ENCODE measurements at regions of chr15 and their contacts with region 1.

Region 1: DNA sequence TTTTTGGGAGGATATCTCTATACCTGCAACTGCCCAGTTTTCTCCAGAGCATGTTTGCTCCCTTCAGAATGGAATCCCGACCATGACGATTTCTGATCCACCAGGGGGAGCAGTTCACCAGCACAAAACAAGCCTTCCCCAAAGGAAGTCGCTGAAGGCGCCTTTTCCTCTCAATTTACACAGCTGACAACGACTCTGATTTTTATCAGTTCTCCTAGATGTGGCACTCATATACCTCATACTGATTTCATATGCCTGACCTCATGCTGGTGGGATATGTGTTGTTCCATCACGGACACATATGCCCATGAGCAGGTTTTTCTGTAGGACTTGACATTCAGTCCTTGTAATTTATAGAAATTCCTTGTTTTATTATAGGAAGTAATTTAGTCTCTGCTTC is 1028.2 kb downstream of the MCTP2 start:
- DNase-seq: peak; percentile 58
- H3K4me3 ChIP-seq: no peak overlapping the region
- H3K27ac ChIP-seq: no peak overlapping the region
- H3K4me1 ChIP-seq: peaks cover 18% of the 10 kb centered on the region
- H3K27me3 ChIP-seq: no peaks in the 10 kb centered on the region
- CTCF ChIP-seq: peak; percentile 67 to 81

Region 2: GRCh38 chr15:95025924-95026728 is 233.4 kb before region 1 on chr15:
- CTCF ChIA-PET with region 1: no interaction called
- dilution Hi-C with region 1: no loop called
- in situ Hi-C with region 1: loop called in 1 of 2 experiments (anchors 10 kb)
- intact Hi-C with region 1: loop called (anchors 2 kb)
- DNase-seq: peak; percentile 50
- H3K4me3 ChIP-seq: no peak overlapping the region
- H3K27ac ChIP-seq: no peak overlapping the region
- H3K4me1 ChIP-seq: no peaks in the 10 kb centered on the region
- H3K27me3 ChIP-seq: no peaks in the 10 kb centered on the region
- CTCF ChIP-seq: peak; percentile 62 to 80

Region 3: DNA sequence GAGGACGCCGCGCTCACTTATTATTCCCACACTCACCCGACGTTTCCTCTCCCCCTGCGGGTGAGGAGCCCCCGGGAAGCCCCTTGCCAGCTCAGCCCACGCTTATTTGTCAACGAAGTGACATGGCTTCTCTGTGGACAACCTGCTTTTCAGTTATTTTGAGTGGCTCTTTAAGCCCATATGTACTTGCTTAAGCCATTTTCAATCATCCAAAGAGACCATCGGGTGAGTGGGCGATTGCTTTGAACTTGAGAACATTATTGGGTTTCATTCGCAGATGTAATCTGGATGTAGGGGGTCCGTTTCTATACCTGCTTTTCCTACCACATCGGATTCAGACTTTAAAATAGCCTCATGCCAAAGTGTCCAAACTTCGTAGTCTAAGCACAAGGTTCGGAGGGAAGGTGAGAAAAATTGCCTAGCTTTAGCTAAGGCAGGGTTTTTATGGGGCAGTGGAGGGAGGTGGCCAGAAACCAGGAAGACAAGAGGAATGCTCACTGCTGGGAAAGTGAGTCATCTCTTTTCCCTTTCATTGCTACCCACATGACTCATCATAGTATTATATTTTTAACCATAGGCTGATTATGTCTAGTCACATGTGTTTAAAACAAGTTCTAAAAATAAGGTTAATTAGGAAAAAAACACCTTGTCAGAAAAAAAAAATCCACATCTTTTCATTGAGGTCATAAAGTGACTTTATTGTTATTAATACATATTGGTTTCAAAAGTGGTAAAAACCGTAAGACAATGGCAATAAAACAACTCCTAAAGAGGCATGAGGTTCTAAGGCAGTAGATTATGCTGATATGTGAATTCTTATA is 297.9 kb after region 1 on chr15:
- CTCF ChIA-PET with region 1: no interaction called
- dilution Hi-C with region 1: no loop called
- in situ Hi-C with region 1: no loop called
- intact Hi-C with region 1: loop called (anchors 5 kb)
- DNase-seq: peak; percentile 90
- H3K4me3 ChIP-seq: no peak overlapping the region
- H3K27ac ChIP-seq: peak overlapping the region; percentile 81
- H3K4me1 ChIP-seq: peaks cover 30% of the 10 kb centered on the region
- H3K27me3 ChIP-seq: no peaks in the 10 kb centered on the region
- CTCF ChIP-seq: no peak

Region 4: GRCh38 chr15:96345560-96346399 is 1086.3 kb after region 1 on chr15:
- CTCF ChIA-PET with region 1: no interaction called
- dilution Hi-C with region 1: no loop called
- in situ Hi-C with region 1: loop called in 1 of 2 experiments (anchors 10 kb)
- intact Hi-C with region 1: loop called (anchors 1 kb)
- DNase-seq: no peak
- H3K4me3 ChIP-seq: peak overlapping the region; percentile 30 to 47 (median 33)
- H3K27ac ChIP-seq: no peak overlapping the region
- H3K4me1 ChIP-seq: no peaks in the 10 kb centered on the region
- H3K27me3 ChIP-seq: no peaks in the 10 kb centered on the region
- CTCF ChIP-seq: peak; percentile 48 to 66

Region 5: GRCh38 chr15:97234851-97235610 is 1975.5 kb after region 1 on chr15:
- CTCF ChIA-PET with region 1: no interaction called
- dilution Hi-C with region 1: no loop called
- in situ Hi-C with region 1: loop called (anchors 25 kb)
- intact Hi-C with region 1: loop called (anchors 2 kb)
- DNase-seq: peak; percentile 35
- H3K4me3 ChIP-seq: no peak overlapping the region
- H3K27ac ChIP-seq: no peak overlapping the region
- H3K4me1 ChIP-seq: no peaks in the 10 kb centered on the region
- H3K27me3 ChIP-seq: no peaks in the 10 kb centered on the region
- CTCF ChIP-seq: peak; percentile 87 to 88

Measured in mammary epithelial cell (primary cell).